ENCODE measurements at regions of chr5 and their contacts with region 1.

Region 1: DNA sequence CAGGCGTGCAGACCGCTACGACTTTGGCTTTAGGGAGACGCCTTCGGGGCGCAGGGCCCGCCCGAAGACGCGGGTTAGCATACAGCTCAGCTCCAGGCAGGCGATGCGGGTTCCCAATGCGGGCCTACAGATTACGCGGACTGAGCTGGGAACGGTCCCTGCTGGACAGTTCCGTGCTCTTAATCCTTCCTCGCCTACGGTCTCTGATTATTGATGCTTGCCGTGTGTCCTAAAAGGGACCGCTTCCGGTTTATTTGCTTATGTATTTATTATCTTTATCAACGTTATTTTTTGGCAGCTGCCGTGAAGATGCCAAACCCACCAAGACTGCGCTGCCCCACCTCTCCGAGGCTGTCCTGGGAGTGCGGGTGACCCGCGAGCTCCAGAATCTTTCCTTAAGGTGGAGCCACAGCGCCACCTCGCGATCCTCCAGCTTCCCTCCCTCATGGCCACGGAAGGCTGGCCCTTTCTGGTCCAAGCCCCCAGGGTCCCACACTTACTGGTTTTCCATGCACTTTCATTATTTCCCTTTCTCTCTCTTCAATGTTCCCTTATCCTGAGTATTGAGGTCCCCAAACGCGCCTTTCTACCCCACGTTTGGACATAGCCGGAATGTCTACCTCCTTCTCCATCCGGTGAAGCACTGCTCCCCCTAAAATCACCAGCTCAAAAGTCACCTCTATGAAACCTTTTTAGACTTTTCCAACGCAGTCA is 7.0 kb upstream of the EBF1 start:
- DNase-seq: peak; percentile 55 to 61 (median 59)
- H3K4me3 ChIP-seq: peak overlapping the region; percentile 31 to 42
- H3K4me3 Mint-ChIP-seq: peak overlapping the region; percentile 61 to 93 (median 86)
- H3K27ac ChIP-seq: no peak overlapping the region
- H3K27ac Mint-ChIP-seq: peak overlapping the region in 5 of 7 donors; percentile 6 to 83 (median 61)
- H3K4me1 ChIP-seq: peaks cover 21% of the 10 kb centered on the region
- H3K4me1 Mint-ChIP-seq: peaks cover 18 to 32% (median 22%) of the 10 kb centered on the region in 4 donors
- H3K27me3 ChIP-seq: peaks cover 30% of the 10 kb centered on the region
- H3K27me3 Mint-ChIP-seq: peaks cover 47 to 55% of the 10 kb centered on the region in 2 donors

Region 2: DNA sequence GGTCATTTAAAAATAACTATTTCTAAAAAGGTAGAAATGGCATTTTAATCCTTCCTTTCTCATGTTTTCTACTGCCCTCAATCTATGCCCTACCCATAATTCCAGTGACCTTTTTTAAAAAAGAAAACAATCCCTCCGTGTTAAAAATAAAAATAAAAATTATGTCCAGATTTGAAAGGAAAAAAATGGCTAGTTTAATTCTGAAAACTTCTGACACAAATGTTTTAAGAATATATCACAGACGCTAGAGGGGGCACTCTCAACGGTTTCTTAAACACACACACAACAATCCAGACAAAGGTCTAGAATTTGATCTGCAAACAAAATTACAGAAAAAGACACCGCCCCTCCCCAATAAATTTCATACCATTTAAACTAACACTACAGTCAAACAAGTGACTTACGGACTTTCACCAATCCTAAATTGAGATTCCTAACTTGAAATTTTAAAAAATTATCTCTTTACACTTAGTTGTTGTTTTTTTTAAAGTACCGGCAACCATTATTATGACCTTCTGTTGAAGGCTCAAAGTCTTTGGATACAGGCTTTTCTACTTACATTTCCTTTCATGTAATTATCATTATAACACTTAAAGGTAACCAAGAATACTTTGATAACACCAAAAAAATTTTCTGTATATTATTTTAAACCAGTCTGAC is 1286.0 kb before region 1 on chr5:
- CTCF ChIA-PET with region 1: interaction called, 3 read pairs
- POLR2A ChIA-PET with region 1: no interaction called
- intact Hi-C with region 1: loop called (anchors 5 kb)
- DNase-seq: peak in 4 of 5 donors; percentile 23 to 28 (median 27)
- H3K4me3 ChIP-seq: no peak overlapping the region
- H3K4me3 Mint-ChIP-seq: peak overlapping the region in 1 of 8 donors; percentile 28
- H3K27ac ChIP-seq: no peak overlapping the region
- H3K27ac Mint-ChIP-seq: peak overlapping the region in 5 of 7 donors; percentile 14 to 73 (median 61)
- H3K4me1 ChIP-seq: peaks cover 9% of the 10 kb centered on the region
- H3K4me1 Mint-ChIP-seq: peaks cover 23 to 41% (median 33%) of the 10 kb centered on the region in 4 donors
- H3K27me3 ChIP-seq: no peaks in the 10 kb centered on the region
- H3K27me3 Mint-ChIP-seq: no peaks in the 10 kb centered on the region

Region 3: DNA sequence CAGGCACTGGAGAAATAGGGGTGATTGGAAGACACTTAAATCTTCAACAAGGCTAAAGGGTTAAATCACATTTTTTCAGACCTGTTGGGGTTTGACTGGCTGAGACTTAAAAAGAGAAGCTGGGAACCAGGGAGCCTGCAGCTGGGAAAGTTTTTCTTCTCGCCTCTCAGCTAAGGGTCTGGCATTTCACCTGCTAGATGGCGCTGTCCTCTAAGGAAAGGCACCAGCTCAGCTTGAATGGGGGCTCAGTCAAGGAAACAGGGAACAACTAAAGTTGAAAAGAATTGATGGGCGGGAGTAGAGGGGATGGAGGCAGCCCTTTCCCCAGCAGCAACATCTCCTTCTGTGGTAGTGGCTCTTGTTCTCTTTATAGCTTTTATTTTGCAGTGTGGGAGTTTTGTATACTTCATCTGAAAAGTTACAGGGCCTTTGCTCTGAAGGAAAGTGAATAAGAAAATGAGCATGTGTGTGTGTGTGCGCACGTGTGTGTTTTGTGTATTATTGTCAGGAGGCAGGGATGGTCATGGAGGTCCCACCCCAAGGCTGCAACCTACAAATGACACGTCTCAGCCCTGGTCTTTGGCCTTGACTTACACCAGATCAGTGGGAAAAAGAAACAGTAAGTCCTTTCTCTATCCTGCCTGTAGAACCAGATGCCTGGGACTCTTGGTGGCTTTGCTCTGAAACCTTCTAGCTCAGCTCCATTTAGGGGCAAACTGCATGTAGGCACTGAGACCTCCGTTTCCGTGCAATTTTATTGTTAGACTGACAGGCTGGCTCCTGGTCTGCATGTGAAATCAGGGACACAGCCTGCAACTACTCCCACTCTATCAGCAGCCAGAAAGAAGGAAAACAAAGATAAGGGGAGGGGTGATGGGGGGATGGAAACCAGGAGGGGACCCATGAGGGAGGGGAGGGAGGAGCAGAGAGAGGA is 931.5 kb before region 1 on chr5:
- CTCF ChIA-PET with region 1: interaction called, 13 read pairs
- POLR2A ChIA-PET with region 1: no interaction called
- intact Hi-C with region 1: loop called (anchors 1 kb)
- DNase-seq: peak in 4 of 5 donors; percentile 13 to 22 (median 18)
- H3K4me3 ChIP-seq: no peak overlapping the region
- H3K4me3 Mint-ChIP-seq: no peak overlapping the region
- H3K27ac ChIP-seq: no peak overlapping the region
- H3K27ac Mint-ChIP-seq: no peak overlapping the region
- H3K4me1 ChIP-seq: no peaks in the 10 kb centered on the region
- H3K4me1 Mint-ChIP-seq: no peaks in the 10 kb centered on the region
- H3K27me3 ChIP-seq: no peaks in the 10 kb centered on the region
- H3K27me3 Mint-ChIP-seq: peaks cover 7 to 12% of the 10 kb centered on the region in 2 donors

Region 4: DNA sequence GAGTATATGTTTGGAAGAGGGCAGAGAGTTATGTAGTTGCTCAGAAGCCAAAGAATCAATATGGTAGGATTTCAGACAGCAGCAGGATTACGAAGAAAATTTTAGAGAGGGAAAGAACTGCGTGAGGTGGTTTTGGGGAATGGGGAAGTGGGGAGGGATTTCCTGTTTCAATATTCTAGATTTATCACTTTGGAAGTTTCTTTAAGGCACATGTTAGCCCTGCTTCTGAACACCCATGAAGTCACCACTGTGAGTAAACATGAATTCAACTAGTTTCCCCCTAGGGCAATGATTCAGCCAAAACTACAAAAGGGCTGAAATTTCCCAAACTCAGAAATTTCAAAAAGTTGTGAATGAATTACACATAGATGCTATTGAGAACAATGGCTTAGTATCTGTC is 139.2 kb before region 1 on chr5:
- CTCF ChIA-PET with region 1: no interaction called
- POLR2A ChIA-PET with region 1: no interaction called
- intact Hi-C with region 1: no loop called
- DNase-seq: no peak
- H3K4me3 ChIP-seq: no peak overlapping the region
- H3K4me3 Mint-ChIP-seq: no peak overlapping the region
- H3K27ac ChIP-seq: no peak overlapping the region
- H3K27ac Mint-ChIP-seq: no peak overlapping the region
- H3K4me1 ChIP-seq: no peaks in the 10 kb centered on the region
- H3K4me1 Mint-ChIP-seq: no peaks in the 10 kb centered on the region
- H3K27me3 ChIP-seq: no peaks in the 10 kb centered on the region
- H3K27me3 Mint-ChIP-seq: peaks cover 5% of the 10 kb centered on the region in 2 donors

Region 5: DNA sequence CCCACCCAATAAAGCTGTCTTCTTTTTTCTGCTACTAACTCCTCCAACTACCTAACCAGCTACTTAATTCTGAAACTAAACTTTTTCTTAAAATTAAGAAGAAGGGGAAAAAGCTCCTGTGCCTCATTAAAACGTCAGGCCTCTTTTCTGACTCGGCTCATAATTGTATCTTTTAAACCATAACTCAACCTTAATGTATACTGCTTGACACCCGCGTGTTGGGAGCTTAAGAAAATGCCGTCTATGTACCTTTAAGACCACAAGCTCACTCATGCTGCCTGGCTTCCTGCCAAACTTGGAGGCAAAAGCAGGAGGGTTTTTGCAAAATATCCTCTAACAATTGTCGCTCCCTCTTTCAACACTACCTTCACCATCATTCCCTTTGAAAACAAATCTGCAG is 12.0 kb before region 1 on chr5:
- CTCF ChIA-PET with region 1: interaction called, 33 read pairs
- POLR2A ChIA-PET with region 1: interaction called, 3 read pairs
- intact Hi-C with region 1: no loop called
- DNase-seq: peak in 3 of 5 donors; percentile 33 to 42 (median 39)
- H3K4me3 ChIP-seq: no peak overlapping the region
- H3K4me3 Mint-ChIP-seq: peak overlapping the region in 3 of 8 donors; percentile 34 to 43 (median 38)
- H3K27ac ChIP-seq: no peak overlapping the region
- H3K27ac Mint-ChIP-seq: no peak overlapping the region
- H3K4me1 ChIP-seq: peaks cover 24% of the 10 kb centered on the region
- H3K4me1 Mint-ChIP-seq: peaks cover 16 to 41% (median 23%) of the 10 kb centered on the region in 4 donors
- H3K27me3 ChIP-seq: peaks cover 12% of the 10 kb centered on the region
- H3K27me3 Mint-ChIP-seq: peaks cover 25 to 29% of the 10 kb centered on the region in 2 donors

Region 6: GRCh38 chr5:159133041-159133741 is 26.5 kb after region 1 on chr5:
- CTCF ChIA-PET with region 1: interaction called, 51 read pairs
- POLR2A ChIA-PET with region 1: no interaction called
- intact Hi-C with region 1: loop called (anchors 1 kb)
- DNase-seq: peak in 4 of 5 donors; percentile 43 to 52 (median 46)
- H3K4me3 ChIP-seq: no peak overlapping the region
- H3K4me3 Mint-ChIP-seq: no peak overlapping the region
- H3K27ac ChIP-seq: no peak overlapping the region
- H3K27ac Mint-ChIP-seq: no peak overlapping the region
- H3K4me1 ChIP-seq: no peaks in the 10 kb centered on the region
- H3K4me1 Mint-ChIP-seq: no peaks in the 10 kb centered on the region
- H3K27me3 ChIP-seq: peaks cover 3% of the 10 kb centered on the region
- H3K27me3 Mint-ChIP-seq: peaks cover 11 to 18% of the 10 kb centered on the region in 2 donors

Measured in CD4-positive, alpha-beta memory T cell (primary cell).